ENCODE measurements at regions of chr15 and their contacts with region 1.

Region 1: DNA sequence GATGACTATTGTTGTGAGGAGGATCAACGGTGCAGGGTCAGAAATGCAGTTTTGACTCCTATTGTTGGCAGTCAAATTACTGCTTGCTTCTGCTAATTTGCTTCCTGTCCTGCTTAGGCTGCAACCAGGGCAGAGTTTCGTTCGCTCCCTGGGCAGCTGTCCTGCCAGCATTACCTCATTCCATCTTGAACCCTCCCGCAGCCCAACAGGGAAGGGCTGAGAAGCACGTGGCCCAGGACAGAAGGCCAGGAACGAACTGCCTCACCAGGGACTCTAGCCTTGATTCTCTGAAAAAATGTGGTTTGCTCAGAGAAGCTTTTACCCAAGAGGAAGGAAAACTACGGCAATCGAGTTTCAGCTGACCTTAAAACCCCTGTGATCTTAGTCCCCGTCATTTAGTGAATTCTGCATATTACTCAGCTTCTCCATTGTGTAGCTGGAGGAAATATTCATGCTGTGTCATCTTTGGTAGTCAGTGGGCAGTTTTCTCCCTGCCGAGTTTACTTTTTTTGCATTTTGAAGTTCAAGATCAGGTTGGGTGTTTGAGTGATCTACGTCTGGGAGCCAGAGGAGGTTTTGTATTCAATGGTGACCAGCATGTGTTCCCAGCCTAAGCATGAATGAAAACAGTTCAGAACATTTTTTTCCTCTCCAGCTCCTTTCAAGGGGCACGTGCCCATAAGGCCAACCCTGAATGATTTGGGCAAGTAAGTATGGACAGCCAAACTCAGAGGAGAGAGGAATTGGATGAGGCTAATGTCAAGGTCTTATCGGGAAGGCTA is 23.0 kb downstream of the TLNRD1 start:
- DNase-seq: peak; percentile 82
- ATAC-seq: peak; percentile 96
- H3K4me3 ChIP-seq: no peak overlapping the region
- H3K27ac ChIP-seq: peak overlapping the region; percentile 24
- H3K4me1 ChIP-seq: peaks cover 13% of the 10 kb centered on the region
- H3K27me3 ChIP-seq: no peaks in the 10 kb centered on the region
- CTCF ChIP-seq: no peak

Region 2: GRCh38 chr15:80906159-80906766 is 117.4 kb before region 1 on chr15:
- intact Hi-C with region 1: no loop called
- DNase-seq: no peak
- ATAC-seq: no peak
- H3K4me3 ChIP-seq: no peak overlapping the region
- H3K27ac ChIP-seq: no peak overlapping the region
- H3K4me1 ChIP-seq: no peaks in the 10 kb centered on the region
- H3K27me3 ChIP-seq: no peaks in the 10 kb centered on the region
- CTCF ChIP-seq: no peak

Region 3: GRCh38 chr15:81087066-81087465 is 63.4 kb after region 1 on chr15:
- intact Hi-C with region 1: loop called (anchors 10 kb)
- DNase-seq: no peak
- ATAC-seq: no peak
- H3K4me3 ChIP-seq: no peak overlapping the region
- H3K27ac ChIP-seq: no peak overlapping the region
- H3K4me1 ChIP-seq: peaks cover 3% of the 10 kb centered on the region
- H3K27me3 ChIP-seq: peaks cover 4% of the 10 kb centered on the region
- CTCF ChIP-seq: no peak